AG04449 (cell line): ENCODE measurements at regions of chr6 and their contacts with region 1.

Region 1: GRCh38 chr6:42532038-42532669 is 31.7 kb upstream of the UBR2 start:
- DNase-seq: no peak
- H3K4me3 ChIP-seq: no peak overlapping the region
- CTCF ChIP-seq: peak; percentile 70

Region 2: GRCh38 chr6:42217519-42218367 is 314.4 kb before region 1 on chr6 and contains the start of gene MRPS10:
- CTCF ChIA-PET with region 1: interaction called, 16 read pairs
- POLR2A ChIA-PET with region 1: no interaction called
- DNase-seq: peak; percentile 70
- H3K4me3 ChIP-seq: peak within 1 kb of the TSS; percentile 83
- CTCF ChIP-seq: no peak

Region 3: DNA sequence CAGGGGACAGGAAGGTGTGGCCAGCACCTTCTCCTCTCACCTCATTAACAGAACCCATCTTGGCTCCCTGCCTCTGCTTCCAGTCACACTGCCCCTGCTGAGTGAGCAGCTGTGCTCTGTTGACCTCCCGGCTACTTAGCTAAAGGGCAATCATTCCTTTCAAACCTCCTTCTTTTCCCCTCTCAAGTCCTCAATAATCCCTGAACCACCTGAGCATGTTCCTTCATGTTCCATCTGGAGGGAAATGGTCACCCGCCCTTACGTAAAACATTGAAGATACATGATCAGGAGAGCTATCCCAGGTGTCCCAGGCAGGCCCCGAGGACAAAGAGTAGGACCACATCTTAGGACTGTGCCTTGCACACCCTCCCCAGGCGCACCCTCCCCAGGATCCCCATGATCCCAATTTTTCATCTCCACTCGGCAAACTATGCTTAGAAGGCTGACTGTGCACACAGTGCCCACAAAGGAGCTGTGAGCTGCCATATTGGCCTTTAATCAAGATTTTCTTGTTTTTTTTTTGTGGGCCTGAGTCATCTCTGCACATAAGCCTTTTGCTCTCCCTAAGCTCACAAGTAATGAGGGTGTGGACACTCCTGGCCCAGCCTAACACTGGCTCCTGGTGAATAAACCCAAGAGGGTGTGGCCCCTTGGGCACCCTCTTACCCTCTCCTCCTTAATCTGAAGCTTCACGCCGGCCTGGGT is 292.7 kb before region 1 on chr6:
- CTCF ChIA-PET with region 1: interaction called, 12 read pairs
- POLR2A ChIA-PET with region 1: no interaction called
- DNase-seq: no peak
- H3K4me3 ChIP-seq: no peak overlapping the region
- CTCF ChIP-seq: no peak

Region 4: GRCh38 chr6:42315991-42316378 is 216.2 kb before region 1 on chr6:
- CTCF ChIA-PET with region 1: interaction called, 15 read pairs
- POLR2A ChIA-PET with region 1: no interaction called
- DNase-seq: peak; percentile 89
- H3K4me3 ChIP-seq: no peak overlapping the region
- CTCF ChIP-seq: no peak

Region 5: GRCh38 chr6:42440778-42441696 is 91.1 kb before region 1 on chr6:
- CTCF ChIA-PET with region 1: interaction called, 11 read pairs
- POLR2A ChIA-PET with region 1: no interaction called
- DNase-seq: no peak
- H3K4me3 ChIP-seq: peak overlapping the region; percentile 24
- CTCF ChIP-seq: no peak

Region 6: GRCh38 chr6:42505377-42505702 is 26.8 kb before region 1 on chr6:
- CTCF ChIA-PET with region 1: interaction called, 33 read pairs
- POLR2A ChIA-PET with region 1: no interaction called
- DNase-seq: peak; percentile 37
- H3K4me3 ChIP-seq: no peak overlapping the region
- CTCF ChIP-seq: no peak

Region 7: DNA sequence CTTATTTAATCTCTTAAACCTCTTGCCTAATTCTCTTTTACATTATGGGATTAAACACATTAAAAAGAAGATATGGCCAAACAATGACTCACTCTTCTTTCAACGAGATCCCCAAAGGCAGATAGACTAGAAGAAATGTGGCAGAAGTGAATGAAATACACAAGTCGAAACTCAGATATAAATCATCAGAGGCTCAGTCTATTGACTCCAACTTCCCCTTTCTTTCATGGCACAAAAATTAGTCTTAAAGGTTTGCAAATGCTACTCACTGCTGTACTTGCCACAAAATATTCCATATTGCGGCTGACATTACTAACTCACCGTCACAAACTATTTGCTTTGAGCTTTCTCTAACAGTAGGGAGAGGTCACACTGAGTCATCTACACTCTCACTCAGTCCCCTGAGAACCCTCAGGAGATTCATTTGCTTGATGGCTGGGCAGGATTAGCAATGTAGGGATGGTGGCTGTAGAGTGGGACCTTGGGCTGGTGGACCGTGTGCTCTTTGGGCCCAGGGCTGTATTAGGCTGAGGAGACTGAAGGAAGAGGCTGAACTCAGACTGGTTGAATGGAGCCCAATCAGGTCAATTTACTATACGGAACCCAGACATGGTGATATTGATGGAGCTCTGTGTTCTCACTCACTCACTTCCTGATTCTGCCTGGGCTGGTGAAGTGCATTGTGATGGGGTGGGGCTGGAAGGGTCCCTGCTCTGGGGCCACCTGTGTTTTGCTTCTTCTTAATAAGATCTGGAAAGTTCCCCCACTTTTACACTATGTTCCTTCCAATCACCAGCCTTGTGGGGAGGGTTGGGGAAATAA is 11.2 kb before region 1 on chr6:
- CTCF ChIA-PET with region 1: interaction called, 62 read pairs
- POLR2A ChIA-PET with region 1: no interaction called
- DNase-seq: peak; percentile 34
- H3K4me3 ChIP-seq: no peak overlapping the region
- CTCF ChIP-seq: no peak

Region 8: GRCh38 chr6:43076464-43077332 is 544.5 kb after region 1 on chr6:
- CTCF ChIA-PET with region 1: no interaction called
- POLR2A ChIA-PET with region 1: no interaction called
- DNase-seq: no peak
- H3K4me3 ChIP-seq: peak overlapping the region; percentile 94
- CTCF ChIP-seq: no peak